Activated CD8-positive, alpha-beta memory T cell treated with anti-CD3 and anti-CD28 coated beads, Interleukin-2, amount 10 ng/mL, durations not matched to agents 7 days and 5 days (primary cell): ENCODE measurements at regions of chr11 and their contacts with region 1.

Region 1: DNA sequence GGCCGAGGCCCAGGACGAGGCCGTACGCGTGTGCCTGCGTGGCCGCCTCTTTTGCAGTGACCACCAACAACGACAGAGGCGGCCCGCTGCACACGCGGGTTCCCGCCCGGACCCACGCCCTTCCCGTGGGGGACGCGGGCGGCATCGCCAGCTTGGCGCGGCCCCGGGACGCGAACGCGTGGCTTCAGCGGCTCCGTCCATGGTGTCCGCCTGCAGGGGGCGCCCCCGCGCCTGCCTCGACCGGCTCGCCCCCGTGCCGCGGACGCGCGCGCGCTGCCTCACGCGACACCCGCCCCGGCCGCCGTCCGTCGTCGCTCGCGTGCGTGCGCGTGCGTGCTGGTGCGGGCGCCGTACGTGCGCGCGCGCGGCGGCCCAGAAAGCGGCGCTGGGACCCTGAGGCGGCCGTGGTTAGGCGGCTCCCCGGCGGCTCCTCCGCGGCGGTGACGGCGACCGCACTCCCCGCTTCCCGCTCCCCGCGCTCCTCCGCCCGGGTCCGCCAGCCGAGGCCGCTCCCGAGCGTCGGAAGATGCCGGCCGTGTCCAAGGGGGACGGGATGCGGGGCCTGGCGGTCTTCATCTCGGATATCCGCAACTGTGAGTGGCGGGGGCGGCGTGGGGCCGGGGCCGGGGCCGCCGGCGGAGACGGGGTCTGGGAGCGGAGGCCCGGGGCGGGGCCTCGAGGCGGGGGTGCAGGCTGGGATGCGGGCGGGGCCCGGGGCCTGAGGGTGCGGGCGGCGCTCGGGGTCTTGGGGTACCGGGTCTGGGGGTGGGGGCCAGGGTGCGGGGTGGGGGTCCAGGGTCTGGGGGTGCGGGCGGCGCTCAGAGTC is at the start of gene AP2A2:
- DNase-seq: peak; percentile 89
- ATAC-seq: peak; percentile 77
- H3K4me3 Mint-ChIP-seq: peak within 1 kb of the TSS; percentile 73
- H3K27ac Mint-ChIP-seq: peak within 1 kb of the TSS; percentile 70
- H3K4me1 Mint-ChIP-seq: peaks cover 24% of the 10 kb centered on the region
- H3K27me3 Mint-ChIP-seq: no peaks in the 10 kb centered on the region
- total RNA-seq, gene AP2A2: 36.3 to 52.2 TPM

Region 2: GRCh38 chr11:876519-876918 is 49.2 kb before region 1 on chr11:
- CTCF ChIA-PET with region 1: no interaction called
- DNase-seq: no peak
- ATAC-seq: no peak
- H3K4me3 Mint-ChIP-seq: no peak overlapping the region
- H3K27ac Mint-ChIP-seq: no peak overlapping the region
- H3K4me1 Mint-ChIP-seq: no peaks in the 10 kb centered on the region
- H3K27me3 Mint-ChIP-seq: no peaks in the 10 kb centered on the region

Region 3: GRCh38 chr11:910589-911195 is 15.0 kb before region 1 on chr11 and contains the start of gene CHID1:
- CTCF ChIA-PET with region 1: interaction called, 16 read pairs
- DNase-seq: peak; percentile 89
- ATAC-seq: peak; percentile 95
- H3K4me3 Mint-ChIP-seq: peak within 1 kb of the TSS; percentile 94
- H3K27ac Mint-ChIP-seq: peak within 1 kb of the TSS; percentile 83
- H3K4me1 Mint-ChIP-seq: peaks cover 22% of the 10 kb centered on the region
- H3K27me3 Mint-ChIP-seq: no peaks in the 10 kb centered on the region
- total RNA-seq, gene CHID1: 46.8 to 59.4 TPM